ENCODE measurements at regions of chr6 and their contacts with region 1.

Region 1: GRCh38 chr6:32952817-32953739 is at the start of gene HLA-DMA:
- DNase-seq: peak; percentile 79
- H3K4me3 Mint-ChIP-seq: peak within 1 kb of the TSS; percentile 81
- H3K27ac Mint-ChIP-seq: peak within 1 kb of the TSS; percentile 72
- H3K4me1 Mint-ChIP-seq: peaks cover 57% of the 10 kb centered on the region
- H3K27me3 Mint-ChIP-seq: no peaks in the 10 kb centered on the region
- total RNA-seq, gene HLA-DMA: 14.1 and 14.2 TPM in 2 replicates

Region 2: GRCh38 chr6:32940656-32941213 is 12.3 kb before region 1 on chr6 and contains the start of gene HLA-DMB:
- intact Hi-C with region 1: loop called (anchors 1 kb)
- DNase-seq: peak; percentile 52
- H3K4me3 Mint-ChIP-seq: peak within 1 kb of the TSS; percentile 80
- H3K27ac Mint-ChIP-seq: peak within 1 kb of the TSS; percentile 91
- H3K4me1 Mint-ChIP-seq: peaks cover 59% of the 10 kb centered on the region
- H3K27me3 Mint-ChIP-seq: peaks cover 4% of the 10 kb centered on the region
- total RNA-seq, gene HLA-DMB: 2.7 and 2.8 TPM in 2 replicates

Region 3: DNA sequence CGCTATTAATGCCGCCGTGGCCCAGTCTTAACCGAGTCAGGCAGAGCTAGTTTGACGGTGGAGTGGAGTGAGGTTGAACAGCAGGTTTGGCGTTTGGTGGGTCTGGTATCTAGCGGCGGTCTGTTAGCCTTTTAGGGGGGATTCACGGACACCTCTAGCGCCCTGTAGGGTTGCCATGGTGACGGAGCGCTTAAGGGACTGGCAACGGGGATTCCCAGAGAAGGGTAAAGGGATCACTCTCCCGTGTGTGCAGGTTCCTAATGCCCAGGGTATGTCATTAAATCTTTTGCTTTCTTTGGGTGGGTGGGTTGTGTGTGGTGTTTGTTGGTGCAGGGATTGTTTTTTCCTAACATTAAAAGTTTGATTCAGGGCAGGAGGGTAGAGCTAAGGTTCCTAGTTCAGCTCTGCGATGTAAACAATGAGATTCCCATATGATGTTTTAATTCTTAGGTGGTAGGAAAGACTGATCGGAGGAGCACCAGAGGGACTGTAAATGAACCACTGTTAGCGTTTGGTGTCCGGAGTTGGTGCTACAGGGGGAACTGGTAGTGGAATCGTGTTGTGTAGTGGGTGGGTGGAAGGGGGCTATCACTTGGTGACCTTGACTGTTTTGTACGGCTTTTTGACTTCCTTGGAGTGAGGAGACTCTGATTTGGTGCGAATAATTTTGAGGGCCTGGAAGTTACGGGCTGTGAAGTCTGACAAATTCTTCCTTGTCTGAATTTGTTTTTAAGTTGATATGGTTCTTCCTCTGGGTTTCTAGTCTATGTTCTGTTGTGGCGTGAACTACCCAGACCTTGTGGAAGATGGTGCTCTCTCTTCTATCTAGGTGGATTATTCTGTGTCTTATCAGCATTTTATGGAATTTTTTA is 20.3 kb after region 1 on chr6:
- intact Hi-C with region 1: no loop called
- DNase-seq: peak; percentile 46
- H3K4me3 Mint-ChIP-seq: peak overlapping the region; percentile 96
- H3K27ac Mint-ChIP-seq: peak overlapping the region; percentile 98
- H3K4me1 Mint-ChIP-seq: peaks cover 38% of the 10 kb centered on the region
- H3K27me3 Mint-ChIP-seq: peaks cover 4% of the 10 kb centered on the region

Region 4: GRCh38 chr6:32984605-32985389 is 31.7 kb after region 1 on chr6:
- intact Hi-C with region 1: loop called (anchors 1 kb)
- DNase-seq: peak; percentile 78
- H3K4me3 Mint-ChIP-seq: no peak overlapping the region
- H3K27ac Mint-ChIP-seq: peak overlapping the region; percentile 73
- H3K4me1 Mint-ChIP-seq: peaks cover 37% of the 10 kb centered on the region
- H3K27me3 Mint-ChIP-seq: no peaks in the 10 kb centered on the region